Posterior cingulate gyrus (tissue), 11 donors: ENCODE measurements at regions of chr13 and their contacts with region 1.

Region 1: DNA sequence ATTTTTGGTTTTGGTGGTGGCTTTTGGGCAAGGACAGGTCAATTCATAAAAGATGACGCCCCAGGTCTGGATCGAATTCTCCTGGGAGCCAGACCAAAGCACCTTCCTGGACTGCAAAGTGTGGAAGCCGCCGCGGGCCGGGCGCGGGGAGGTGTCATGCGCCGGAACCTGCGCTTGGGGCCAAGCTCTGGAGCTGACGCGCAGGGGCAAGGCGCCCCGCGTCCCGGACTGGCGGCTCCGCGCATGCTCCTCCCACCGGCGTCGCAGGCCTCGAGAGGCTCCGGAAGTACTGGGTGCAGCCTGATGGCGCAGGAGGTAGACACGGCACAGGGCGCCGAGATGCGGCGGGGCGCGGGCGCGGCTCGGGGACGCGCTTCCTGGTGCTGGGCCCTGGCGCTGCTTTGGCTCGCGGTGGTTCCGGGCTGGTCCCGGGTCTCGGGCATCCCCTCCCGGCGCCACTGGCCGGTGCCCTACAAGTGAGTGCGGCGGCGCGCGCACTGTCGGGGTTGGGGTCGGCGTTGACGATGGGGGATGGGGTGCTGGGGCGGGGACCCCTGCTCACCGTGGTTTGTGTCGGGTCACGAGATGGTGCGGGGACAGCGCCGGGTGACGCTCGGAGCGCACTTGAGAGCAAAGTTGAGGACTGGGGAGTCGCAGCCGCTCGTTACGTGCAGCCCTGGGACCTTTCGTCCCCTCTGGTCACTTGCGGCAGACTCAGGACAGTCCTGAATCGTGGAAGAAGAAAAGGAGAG is at the start of gene CLN5:
- DNase-seq: peak; percentile 90 to 99 (median 94)

Region 2: DNA sequence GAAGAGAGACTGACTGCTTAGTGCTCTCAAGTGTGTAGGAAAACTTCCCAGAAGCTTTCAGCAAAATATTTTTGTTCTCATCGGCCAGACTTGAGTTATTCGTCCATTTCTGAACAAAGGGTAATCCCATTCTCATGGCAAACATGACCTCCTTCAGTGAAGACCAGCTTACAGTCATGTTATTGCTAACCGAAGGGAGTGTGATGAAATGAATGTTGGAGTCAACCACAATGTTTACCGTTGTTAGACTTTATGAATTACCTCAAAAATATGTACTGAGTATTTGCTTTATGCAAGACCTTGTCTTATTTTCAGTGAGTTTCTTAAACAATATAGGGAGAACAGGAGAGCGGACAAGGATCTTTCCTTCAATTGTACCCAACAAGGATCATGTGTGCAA is 1127.3 kb before region 1 on chr13:
- intact Hi-C with region 1: no loop called
- DNase-seq: no peak

Region 3: DNA sequence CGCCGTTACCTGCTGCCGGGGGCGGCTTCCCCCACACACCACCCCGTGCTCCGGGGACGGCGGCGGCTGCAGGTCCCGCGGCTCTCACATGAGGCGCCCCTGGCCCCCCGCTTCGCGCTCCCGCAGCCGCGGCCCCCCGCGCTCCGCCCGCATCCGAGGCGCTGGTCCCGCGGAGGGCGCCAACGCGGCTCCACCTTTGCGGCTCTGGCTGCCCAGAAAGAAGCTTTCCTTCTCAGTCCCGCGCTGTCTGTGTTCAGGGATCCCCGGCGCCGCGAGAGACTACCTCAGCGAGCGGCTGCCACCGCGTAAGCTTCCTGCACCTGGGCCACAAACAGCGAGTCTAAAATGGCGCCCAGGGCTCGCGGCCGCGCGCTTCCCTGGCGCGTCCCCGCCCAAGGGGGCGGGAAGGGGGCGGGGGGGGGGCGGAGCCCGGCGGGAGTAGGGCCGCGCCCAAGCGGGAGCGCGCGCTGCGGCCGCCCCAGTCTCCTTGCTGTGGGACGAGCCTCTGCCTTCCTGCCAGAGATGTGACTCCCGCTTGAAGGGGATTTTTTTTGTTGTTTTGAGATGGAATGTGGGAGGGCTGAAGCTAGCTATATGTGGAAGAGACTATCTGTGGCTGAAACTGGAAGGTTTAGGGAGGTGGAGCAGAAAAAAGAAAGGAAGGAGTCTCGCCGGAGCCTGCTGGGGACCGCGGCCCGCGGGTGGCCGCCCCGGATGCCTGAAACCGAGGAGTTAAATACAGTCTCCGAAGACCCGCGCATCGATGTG is 35.0 kb after region 1 on chr13 and contains the start of gene FBXL3:
- intact Hi-C with region 1: loop called (anchors 2 kb)
- DNase-seq: peak; percentile 71 to 98 (median 84)